ENCODE measurements at regions of chr1 and their contacts with region 1.

Region 1: GRCh38 chr1:212665241-212666115 is 34.2 kb downstream of the BATF3 start:
- DNase-seq: peak; percentile 82
- H3K4me3 ChIP-seq: peak overlapping the region; percentile 38
- H3K27ac ChIP-seq: peak overlapping the region; percentile 46
- H3K4me1 ChIP-seq: peaks cover 4% of the 10 kb centered on the region
- H3K27me3 ChIP-seq: no peaks in the 10 kb centered on the region
- CTCF ChIP-seq: peak; percentile 92

Region 2: GRCh38 chr1:212749821-212750535 is 84.5 kb after region 1 on chr1:
- intact Hi-C with region 1: no loop called
- DNase-seq: no peak
- H3K4me3 ChIP-seq: no peak overlapping the region
- H3K27ac ChIP-seq: no peak overlapping the region
- H3K4me1 ChIP-seq: no peaks in the 10 kb centered on the region
- H3K27me3 ChIP-seq: no peaks in the 10 kb centered on the region
- CTCF ChIP-seq: peak; percentile 67

Region 3: GRCh38 chr1:212760126-212760823 is 94.8 kb after region 1 on chr1:
- intact Hi-C with region 1: no loop called
- DNase-seq: no peak
- H3K4me3 ChIP-seq: no peak overlapping the region
- H3K27ac ChIP-seq: no peak overlapping the region
- H3K4me1 ChIP-seq: no peaks in the 10 kb centered on the region
- H3K27me3 ChIP-seq: no peaks in the 10 kb centered on the region
- CTCF ChIP-seq: peak; percentile 30

Region 4: GRCh38 chr1:212782422-212783154 is 117.1 kb after region 1 on chr1:
- intact Hi-C with region 1: loop called (anchors 5 kb)
- DNase-seq: no peak
- H3K4me3 ChIP-seq: no peak overlapping the region
- H3K27ac ChIP-seq: no peak overlapping the region
- H3K4me1 ChIP-seq: no peaks in the 10 kb centered on the region
- H3K27me3 ChIP-seq: no peaks in the 10 kb centered on the region
- CTCF ChIP-seq: peak; percentile 62

Region 5: GRCh38 chr1:212981571-212982328 is 316.3 kb after region 1 on chr1:
- intact Hi-C with region 1: loop called (anchors 10 kb)
- DNase-seq: no peak
- H3K4me3 ChIP-seq: no peak overlapping the region
- H3K27ac ChIP-seq: no peak overlapping the region
- H3K4me1 ChIP-seq: no peaks in the 10 kb centered on the region
- H3K27me3 ChIP-seq: no peaks in the 10 kb centered on the region
- CTCF ChIP-seq: no peak

Measured in colonic mucosa (tissue), 4 donors.